ENCODE measurements at regions of chr15 and their contacts with region 1.

Region 1: GRCh38 chr15:58749532-58750337 is at the start of gene ADAM10:
- DNase-seq: peak; percentile 95
- ATAC-seq: peak; percentile 92
- H3K4me3 Mint-ChIP-seq: peak within 1 kb of the TSS; percentile 96
- H3K27ac Mint-ChIP-seq: peak within 1 kb of the TSS; percentile 97
- H3K4me1 Mint-ChIP-seq: peaks cover 44% of the 10 kb centered on the region
- H3K27me3 Mint-ChIP-seq: no peaks in the 10 kb centered on the region
- CTCF ChIP-seq: no peak
- total RNA-seq, gene ADAM10: 87.7 and 91.6 TPM in 2 replicates

Region 2: GRCh38 chr15:58574631-58575030 is 175.1 kb before region 1 on chr15:
- CTCF ChIA-PET with region 1: no interaction called
- POLR2A ChIA-PET with region 1: no interaction called
- intact Hi-C with region 1: no loop called
- DNase-seq: no peak
- ATAC-seq: no peak
- H3K4me3 Mint-ChIP-seq: no peak overlapping the region
- H3K27ac Mint-ChIP-seq: no peak overlapping the region
- H3K4me1 Mint-ChIP-seq: peaks cover 3% of the 10 kb centered on the region
- H3K27me3 Mint-ChIP-seq: no peaks in the 10 kb centered on the region
- CTCF ChIP-seq: no peak

Region 3: GRCh38 chr15:58690703-58691102 is 59.0 kb before region 1 on chr15:
- CTCF ChIA-PET with region 1: no interaction called
- POLR2A ChIA-PET with region 1: interaction called, 7 read pairs
- intact Hi-C with region 1: loop called (anchors 2 kb)
- DNase-seq: no peak
- ATAC-seq: peak; percentile 97
- H3K4me3 Mint-ChIP-seq: no peak overlapping the region
- H3K27ac Mint-ChIP-seq: no peak overlapping the region
- H3K4me1 Mint-ChIP-seq: peaks cover 33% of the 10 kb centered on the region
- H3K27me3 Mint-ChIP-seq: no peaks in the 10 kb centered on the region
- CTCF ChIP-seq: no peak

Region 4: DNA sequence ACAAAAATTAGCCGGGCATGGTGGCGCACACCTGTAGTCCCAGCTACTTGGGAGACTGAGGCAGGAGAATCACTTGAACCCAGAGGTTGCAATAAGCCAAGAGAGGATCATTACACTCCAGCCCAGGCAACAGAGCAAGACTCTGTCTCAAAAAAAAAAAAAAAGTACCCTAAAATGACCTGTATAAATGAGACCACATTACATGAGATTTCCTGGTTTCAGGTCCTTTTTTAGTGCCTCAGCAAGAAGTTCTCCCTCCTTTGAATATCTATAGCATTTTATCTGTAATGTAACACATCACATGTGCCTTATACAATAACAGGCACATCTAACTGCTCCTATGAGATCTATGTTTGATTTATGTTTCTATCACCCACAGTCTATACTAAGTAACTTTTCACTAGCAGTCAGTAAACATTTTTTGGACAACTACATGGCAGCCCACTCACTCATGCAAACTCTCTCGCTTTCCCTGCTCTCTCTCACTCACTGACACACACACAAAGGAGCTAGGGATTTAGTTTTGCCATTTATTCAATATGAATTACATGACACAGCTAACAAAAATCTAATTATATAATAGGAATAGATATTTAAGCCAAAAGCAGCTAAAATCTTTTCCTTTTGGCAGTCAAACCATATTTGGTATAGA is 34.3 kb before region 1 on chr15:
- CTCF ChIA-PET with region 1: no interaction called
- POLR2A ChIA-PET with region 1: no interaction called
- intact Hi-C with region 1: loop called (anchors 2 kb)
- DNase-seq: no peak
- ATAC-seq: peak; percentile 90
- H3K4me3 Mint-ChIP-seq: peak overlapping the region; percentile 9
- H3K27ac Mint-ChIP-seq: peak overlapping the region; percentile 47
- H3K4me1 Mint-ChIP-seq: peaks cover 27% of the 10 kb centered on the region
- H3K27me3 Mint-ChIP-seq: no peaks in the 10 kb centered on the region
- CTCF ChIP-seq: no peak

Region 5: GRCh38 chr15:58724466-58724865 is 25.3 kb before region 1 on chr15:
- CTCF ChIA-PET with region 1: interaction called, 8 read pairs
- POLR2A ChIA-PET with region 1: interaction called, 37 read pairs
- intact Hi-C with region 1: loop called (anchors 1 kb)
- DNase-seq: no peak
- ATAC-seq: peak; percentile 92
- H3K4me3 Mint-ChIP-seq: peak overlapping the region; percentile 19
- H3K27ac Mint-ChIP-seq: peak overlapping the region; percentile 74
- H3K4me1 Mint-ChIP-seq: peaks cover 64% of the 10 kb centered on the region
- H3K27me3 Mint-ChIP-seq: no peaks in the 10 kb centered on the region
- CTCF ChIP-seq: no peak

Region 6: GRCh38 chr15:58738046-58738707 is 11.6 kb before region 1 on chr15:
- CTCF ChIA-PET with region 1: no interaction called
- POLR2A ChIA-PET with region 1: interaction called, 4 read pairs
- intact Hi-C with region 1: loop called (anchors 1 kb)
- DNase-seq: no peak
- ATAC-seq: peak; percentile 31
- H3K4me3 Mint-ChIP-seq: no peak overlapping the region
- H3K27ac Mint-ChIP-seq: no peak overlapping the region
- H3K4me1 Mint-ChIP-seq: peaks cover 78% of the 10 kb centered on the region
- H3K27me3 Mint-ChIP-seq: no peaks in the 10 kb centered on the region
- CTCF ChIP-seq: no peak